ENCODE measurements at regions of chr16 and their contacts with region 1.

Region 1: DNA sequence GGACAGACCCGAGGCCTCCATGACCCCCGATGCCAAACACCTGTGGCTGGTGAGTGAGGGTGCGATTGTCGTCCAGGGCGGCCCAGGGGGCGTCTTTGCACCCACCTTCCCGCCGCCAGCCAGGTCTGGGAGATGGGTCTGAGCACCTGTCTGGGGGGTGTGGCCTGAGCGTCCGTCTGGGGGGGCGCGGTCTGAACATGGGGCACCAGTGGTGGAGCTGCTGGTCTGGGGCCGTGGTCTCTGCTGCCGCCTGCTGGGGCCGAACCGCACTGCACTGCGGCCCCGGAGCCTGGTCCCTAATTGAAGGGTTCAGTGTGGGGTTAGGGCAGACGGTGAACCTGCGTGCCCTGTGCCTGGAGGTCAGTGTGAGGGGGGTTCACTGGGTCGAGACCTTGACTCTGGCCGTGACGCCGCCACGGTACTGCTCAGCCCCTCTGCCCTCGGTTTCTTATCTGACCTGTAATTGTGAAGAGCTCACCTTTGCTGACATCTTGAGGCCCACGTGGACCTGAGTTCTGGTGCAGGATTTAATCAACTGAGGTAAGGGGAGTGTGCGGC is 12.6 kb upstream of the TCF25 start:
- DNase-seq: peak; percentile 76
- H3K4me3 Mint-ChIP-seq: no peak overlapping the region
- H3K27ac Mint-ChIP-seq: no peak overlapping the region
- H3K4me1 Mint-ChIP-seq: peaks cover 28% of the 10 kb centered on the region
- H3K27me3 Mint-ChIP-seq: no peaks in the 10 kb centered on the region

Region 2: DNA sequence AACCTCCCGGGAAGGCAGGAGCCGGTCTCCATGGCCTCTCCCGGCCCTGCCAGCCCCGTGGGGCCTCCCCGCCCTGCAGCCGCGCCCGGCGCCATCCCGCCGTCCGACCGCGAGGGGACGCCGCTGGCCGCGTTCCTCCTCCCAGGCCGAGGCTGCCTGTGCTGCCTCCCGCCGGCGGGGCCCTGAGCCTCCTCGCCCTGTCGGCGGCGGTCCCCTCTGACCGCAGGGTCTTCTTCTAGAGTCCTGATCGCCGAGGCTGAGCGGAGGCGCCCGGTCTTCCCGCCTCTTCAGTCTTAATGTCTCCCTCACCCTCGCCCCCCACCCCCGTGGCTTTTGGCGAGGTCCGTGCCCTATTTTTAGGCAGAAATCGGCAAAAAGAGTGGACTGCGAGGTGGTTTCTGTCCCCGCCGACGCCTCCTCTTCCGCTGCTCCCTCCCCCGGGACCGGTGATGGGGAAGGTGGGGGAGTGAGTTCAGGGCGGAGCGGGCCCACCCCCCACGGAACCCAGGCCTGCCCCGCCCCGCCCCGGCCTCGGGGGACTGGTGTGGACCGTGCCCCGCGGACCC is 286.1 kb before region 1 on chr16:
- CTCF ChIA-PET with region 1: no interaction called
- intact Hi-C with region 1: loop called (anchors 5 kb)
- DNase-seq: peak; percentile 75
- H3K4me3 Mint-ChIP-seq: peak overlapping the region; percentile 51
- H3K27ac Mint-ChIP-seq: no peak overlapping the region
- H3K4me1 Mint-ChIP-seq: peaks cover 14% of the 10 kb centered on the region
- H3K27me3 Mint-ChIP-seq: peaks cover 11% of the 10 kb centered on the region

Region 3: DNA sequence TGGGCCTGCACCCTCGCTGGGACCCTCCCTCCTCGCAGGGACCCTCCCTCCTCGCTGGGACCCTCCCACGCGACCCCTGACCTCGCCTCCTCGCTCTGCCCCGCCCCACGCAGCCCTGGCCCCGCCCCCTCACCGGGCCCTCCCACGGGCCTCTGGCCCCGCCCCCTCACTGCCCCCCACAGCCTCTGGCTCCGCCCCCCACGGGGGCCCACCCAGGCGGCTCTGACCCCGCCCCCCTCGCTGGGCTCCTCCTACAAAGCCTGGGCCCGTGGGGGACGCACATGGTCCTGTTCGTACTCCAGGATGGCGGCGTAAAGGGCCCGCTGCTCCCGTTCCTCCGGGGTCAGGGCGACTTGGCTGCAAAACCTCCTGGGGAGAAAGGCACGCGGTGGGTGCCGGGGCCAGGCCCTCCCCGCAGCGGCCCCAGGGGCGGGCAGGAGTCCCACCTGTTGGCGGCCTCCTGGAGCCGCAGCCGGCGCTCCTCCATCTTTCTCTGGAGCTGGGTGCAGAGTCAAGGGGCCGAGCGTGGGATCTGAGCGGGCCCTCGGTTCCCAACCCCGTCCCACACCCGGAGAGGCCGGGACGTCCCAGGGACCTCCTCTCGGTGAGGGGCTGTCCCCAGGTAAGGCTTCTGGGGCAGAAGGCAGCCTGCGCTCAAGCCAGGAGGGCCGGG is 149.1 kb before region 1 on chr16:
- CTCF ChIA-PET with region 1: interaction called, 66 read pairs
- intact Hi-C with region 1: loop called (anchors 1 kb)
- DNase-seq: peak; percentile 78
- H3K4me3 Mint-ChIP-seq: peak overlapping the region; percentile 76
- H3K27ac Mint-ChIP-seq: no peak overlapping the region
- H3K4me1 Mint-ChIP-seq: peaks cover 13% of the 10 kb centered on the region
- H3K27me3 Mint-ChIP-seq: no peaks in the 10 kb centered on the region

Region 4: DNA sequence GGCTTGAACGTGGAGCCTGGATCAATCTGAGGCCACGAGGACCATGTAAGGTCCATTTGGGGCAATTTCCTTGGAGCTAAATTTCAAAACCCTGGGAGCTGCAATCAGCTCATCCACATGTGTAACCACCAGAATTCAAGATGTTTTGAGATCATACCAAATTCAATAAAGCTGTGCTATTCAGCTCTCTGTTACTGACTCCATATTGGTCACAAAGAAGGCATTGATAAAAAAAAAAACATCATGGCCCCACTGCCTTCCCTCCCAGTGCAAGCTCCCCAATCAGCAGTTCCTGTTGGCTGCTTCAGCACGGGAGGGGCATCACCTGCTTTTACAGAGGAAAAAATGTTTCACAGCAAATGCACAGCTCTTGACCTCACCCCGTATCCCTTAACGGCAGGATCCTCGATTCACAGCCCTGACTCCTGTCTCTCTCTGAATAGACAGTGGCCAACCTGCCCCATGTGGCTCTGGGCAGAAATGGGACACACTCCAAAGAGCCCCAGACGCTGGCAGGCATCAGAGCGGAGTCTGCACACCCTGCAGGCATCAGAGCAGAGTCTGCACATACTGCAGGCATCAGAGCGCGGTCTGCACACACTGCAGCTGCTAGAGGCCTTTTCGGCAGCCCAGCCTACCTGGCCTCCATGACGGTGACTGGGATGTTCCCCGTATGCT is 81.5 kb before region 1 on chr16:
- CTCF ChIA-PET with region 1: no interaction called
- intact Hi-C with region 1: no loop called
- DNase-seq: no peak
- H3K4me3 Mint-ChIP-seq: no peak overlapping the region
- H3K27ac Mint-ChIP-seq: no peak overlapping the region
- H3K4me1 Mint-ChIP-seq: peaks cover under 1% of the 10 kb centered on the region
- H3K27me3 Mint-ChIP-seq: no peaks in the 10 kb centered on the region

Region 5: DNA sequence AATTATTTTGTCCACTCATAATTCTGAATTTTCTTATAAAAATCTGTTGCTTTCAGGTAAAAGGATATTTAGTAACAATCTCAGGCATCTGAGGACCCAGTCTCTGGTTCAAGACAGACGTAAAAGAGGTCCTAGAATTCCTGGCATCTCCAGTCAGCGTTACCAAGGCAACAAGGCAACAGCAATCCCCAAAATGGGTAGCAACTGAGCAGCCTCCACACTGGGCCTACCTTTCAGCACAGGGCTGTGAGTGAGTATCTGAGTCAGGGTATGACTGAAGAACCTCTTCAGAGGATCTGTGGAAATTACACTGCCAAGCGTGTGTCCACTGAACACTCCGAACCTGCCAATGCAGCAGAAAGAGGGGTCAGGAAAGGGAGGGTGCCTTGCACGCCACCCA is 65.2 kb before region 1 on chr16:
- CTCF ChIA-PET with region 1: interaction called, 11 read pairs
- intact Hi-C with region 1: no loop called
- DNase-seq: no peak
- H3K4me3 Mint-ChIP-seq: no peak overlapping the region
- H3K27ac Mint-ChIP-seq: no peak overlapping the region
- H3K4me1 Mint-ChIP-seq: no peaks in the 10 kb centered on the region
- H3K27me3 Mint-ChIP-seq: no peaks in the 10 kb centered on the region

Region 6: DNA sequence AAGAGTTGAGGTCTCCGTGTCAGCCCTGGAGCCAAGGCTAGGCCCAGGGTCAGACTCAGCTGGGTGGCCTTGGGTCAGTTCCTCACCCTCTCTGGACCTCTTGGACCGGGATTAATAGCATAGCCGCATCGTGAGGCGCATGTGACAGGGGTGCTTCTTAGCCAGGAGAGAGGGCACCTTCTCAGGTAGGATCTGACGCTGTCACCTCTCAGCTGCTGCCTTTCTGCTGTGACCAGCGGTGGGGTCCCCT is 23.6 kb before region 1 on chr16:
- CTCF ChIA-PET with region 1: interaction called, 11 read pairs
- intact Hi-C with region 1: no loop called
- DNase-seq: no peak
- H3K4me3 Mint-ChIP-seq: no peak overlapping the region
- H3K27ac Mint-ChIP-seq: no peak overlapping the region
- H3K4me1 Mint-ChIP-seq: peaks cover 12% of the 10 kb centered on the region
- H3K27me3 Mint-ChIP-seq: peaks cover 2% of the 10 kb centered on the region

Measured in activated naive CD4-positive, alpha-beta T cell treated with anti-CD3 and anti-CD28 coated beads for 36 hours (primary cell).